ENCODE measurements at regions of chr18 and their contacts with region 1.

Region 1: DNA sequence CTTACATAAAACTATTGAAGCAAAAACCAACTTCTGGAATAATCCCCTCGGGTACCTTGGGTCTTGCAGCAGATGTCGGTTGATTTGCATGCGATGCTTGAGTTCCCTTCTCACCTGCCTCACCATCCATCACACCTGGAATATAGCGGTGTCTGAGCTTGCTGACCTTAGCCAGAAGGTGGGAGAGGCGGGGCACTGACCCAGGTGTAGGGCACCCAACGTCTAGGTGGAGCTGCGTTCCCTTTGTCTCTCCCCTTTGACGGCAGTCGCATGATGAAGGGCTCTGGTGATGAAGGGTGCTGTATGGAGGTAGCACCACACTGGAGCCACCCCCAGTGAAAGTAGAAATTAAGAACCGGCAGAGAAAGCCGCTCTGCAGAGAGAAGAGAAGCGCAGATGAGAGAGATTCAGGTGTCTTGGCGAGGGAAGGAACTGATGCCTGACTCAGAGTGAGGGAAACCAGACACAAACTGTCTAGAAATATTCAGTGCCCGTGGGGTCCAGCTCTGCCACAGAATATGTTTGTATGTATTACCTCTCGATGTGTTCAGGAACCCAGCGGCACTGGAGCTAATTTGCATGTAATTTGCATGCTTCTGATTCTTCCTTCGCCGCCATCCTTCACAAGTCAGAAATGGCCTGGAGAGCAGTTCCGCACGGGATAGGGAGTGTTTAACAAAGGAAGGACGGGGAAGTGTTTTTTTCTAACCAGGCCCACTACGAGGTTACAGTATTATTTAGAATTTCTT is 19.4 kb upstream of the MBP start:
- DNase-seq: no peak
- H3K4me3 ChIP-seq: no peak overlapping the region
- H3K27ac ChIP-seq: no peak overlapping the region
- H3K4me1 ChIP-seq: peaks cover 0 to 2% (median 0%) of the 10 kb centered on the region in 4 experiments; a peak in 2 of 7 replicates
- H3K27me3 ChIP-seq: no peaks in the 10 kb centered on the region
- CTCF ChIP-seq: no peak
- EP300 ChIP-seq: no peak
- POLR2A ChIP-seq: no peak
- RAD21 ChIP-seq: no peak

Region 2: GRCh38 chr18:77140439-77141109 is 11.4 kb before region 1 on chr18:
- CTCF ChIA-PET with region 1: interaction called, 20 read pairs
- POLR2A ChIA-PET with region 1: interaction called, 4 read pairs
- DNase-seq: no peak
- H3K4me3 ChIP-seq: no peak overlapping the region
- H3K27ac ChIP-seq: no peak overlapping the region
- H3K4me1 ChIP-seq: no peaks in the 10 kb centered on the region
- H3K27me3 ChIP-seq: no peaks in the 10 kb centered on the region
- CTCF ChIP-seq: no peak
- EP300 ChIP-seq: no peak
- POLR2A ChIP-seq: no peak
- RAD21 ChIP-seq: no peak